GM13977 (cell line): ENCODE measurements at regions of chr3 and their contacts with region 1.

Region 1: DNA sequence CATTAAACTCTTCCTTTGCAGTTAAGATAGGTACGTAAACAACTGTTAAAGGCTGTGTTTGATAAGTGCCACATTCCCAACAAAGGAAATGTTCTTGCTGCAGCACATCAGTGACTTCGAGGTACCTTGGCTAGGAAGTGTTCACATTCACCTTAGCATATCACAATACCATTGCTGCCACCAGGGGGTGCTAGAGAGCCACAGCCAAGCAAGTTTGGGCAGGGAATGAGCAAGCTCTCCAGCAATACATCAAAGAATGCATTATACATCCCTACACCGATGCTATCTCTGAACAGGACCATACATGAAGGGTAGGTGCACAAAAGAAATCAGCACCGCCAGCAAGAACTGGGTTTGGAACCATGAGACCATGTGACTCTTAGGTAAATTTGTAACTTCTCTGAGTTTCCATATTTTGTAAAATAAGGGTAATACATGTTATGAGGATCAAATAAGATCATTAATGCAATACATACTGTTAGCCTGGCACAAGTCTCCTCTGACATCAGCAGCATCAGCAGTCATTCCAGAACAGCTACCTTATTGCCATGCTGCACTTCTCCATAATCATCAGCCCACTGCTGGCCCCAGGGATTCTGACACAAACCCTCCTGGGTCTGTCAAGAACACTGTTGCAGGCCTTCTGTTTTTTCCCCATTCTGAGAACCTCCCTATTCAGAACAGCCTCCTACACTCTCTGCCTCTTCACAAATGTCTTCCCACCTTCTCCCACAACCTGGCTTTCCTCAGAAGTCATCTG is 37.6 kb downstream of the RYK start:
- DNase-seq: peak; percentile 60
- CTCF ChIP-seq: peak; percentile 94

Region 2: GRCh38 chr3:134308350-134308891 is 95.3 kb after region 1 on chr3:
- in situ Hi-C with region 1: loop called (anchors 10 kb)
- DNase-seq: peak; percentile 79
- CTCF ChIP-seq: peak; percentile 95

Region 3: GRCh38 chr3:134378384-134378783 is 165.3 kb after region 1 on chr3:
- in situ Hi-C with region 1: no loop called
- DNase-seq: peak; percentile 67
- CTCF ChIP-seq: peak; percentile 59